ENCODE measurements at regions of chr11 and their contacts with region 1.

Region 1: GRCh38 chr11:118907051-118908042 is 18.4 kb downstream of the BCL9L start:
- DNase-seq: peak; percentile 71 to 85 (median 79)
- H3K4me3 ChIP-seq: no peak overlapping the region
- H3K27ac ChIP-seq: no peak overlapping the region
- H3K4me1 ChIP-seq: peaks cover 0 to 42% (median 37%) of the 10 kb centered on the region in 4 experiments
- H3K27me3 ChIP-seq: no peaks in the 10 kb centered on the region

Region 2: GRCh38 chr11:118438314-118438931 is 468.9 kb before region 1 on chr11:
- CTCF ChIA-PET with region 1: no interaction called
- POLR2A ChIA-PET with region 1: no interaction called
- DNase-seq: peak; percentile 69 to 90 (median 87)
- H3K4me3 ChIP-seq: peak overlapping the region; percentile 81 to 97 (median 90)
- H3K27ac ChIP-seq: peak overlapping the region; percentile 81 to 90
- H3K4me1 ChIP-seq: peaks cover 37 to 80% (median 61%) of the 10 kb centered on the region in 4 experiments
- H3K27me3 ChIP-seq: no peaks in the 10 kb centered on the region

Region 3: GRCh38 chr11:118895142-118896039 is 12.0 kb before region 1 on chr11:
- CTCF ChIA-PET with region 1: interaction called, 10 read pairs
- POLR2A ChIA-PET with region 1: no interaction called
- DNase-seq: no peak
- H3K4me3 ChIP-seq: no peak overlapping the region
- H3K27ac ChIP-seq: no peak overlapping the region
- H3K4me1 ChIP-seq: peaks cover 0 to 33% (median 24%) of the 10 kb centered on the region in 4 experiments
- H3K27me3 ChIP-seq: no peaks in the 10 kb centered on the region

Region 4: DNA sequence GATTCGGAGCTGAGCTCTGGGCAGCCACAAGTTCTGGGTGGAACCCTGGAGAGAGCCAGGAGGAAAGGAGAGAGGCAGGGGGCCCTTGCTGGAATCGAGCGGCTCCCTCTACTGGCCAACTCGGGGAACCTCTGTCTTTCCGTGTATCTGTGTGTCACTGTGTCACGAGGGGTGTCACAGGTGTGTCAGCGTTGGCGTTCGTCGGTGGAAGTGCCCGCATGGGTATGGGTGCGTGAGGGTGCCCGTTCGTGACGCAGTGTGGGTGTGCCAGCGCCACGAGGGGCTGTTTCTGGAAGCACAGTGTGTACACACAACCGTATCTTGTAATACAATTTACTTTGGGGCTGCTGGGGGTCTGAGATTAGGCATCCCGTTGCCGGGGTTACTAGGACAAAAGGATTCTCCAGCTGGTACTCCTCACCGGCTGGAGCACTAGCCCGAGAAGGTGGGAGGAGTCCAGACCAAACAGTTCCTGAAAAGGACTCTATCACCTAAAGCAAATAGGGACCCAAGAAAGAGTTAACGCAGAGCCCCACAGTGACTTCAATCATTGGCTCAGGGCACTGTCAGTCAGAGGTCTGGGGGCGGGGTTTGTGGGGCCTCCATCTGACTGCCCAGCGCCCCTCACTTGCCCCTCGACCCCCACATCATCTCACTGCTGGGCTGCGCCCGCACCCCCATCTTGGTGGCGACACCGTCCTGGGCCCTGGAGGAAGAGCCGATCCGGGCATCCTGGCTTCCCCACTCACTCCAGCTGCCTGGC is 20.9 kb after region 1 on chr11:
- CTCF ChIA-PET with region 1: interaction called, 256 read pairs
- POLR2A ChIA-PET with region 1: interaction called, 39 read pairs
- DNase-seq: peak; percentile 92 to 95 (median 94)
- H3K4me3 ChIP-seq: peak overlapping the region; percentile 66 to 93 (median 82)
- H3K27ac ChIP-seq: peak overlapping the region; percentile 76 to 93
- H3K4me1 ChIP-seq: peaks cover 5 to 75% (median 51%) of the 10 kb centered on the region in 4 experiments
- H3K27me3 ChIP-seq: no peaks in the 10 kb centered on the region

Measured in common myeloid progenitor, CD34-positive (primary cell).